Posterior cingulate gyrus (tissue), 11 donors: ENCODE measurements at regions of chr3 and their contacts with region 1.

Region 1: GRCh38 chr3:38004415-38005076 is 14.0 kb downstream of the VILL start:
- DNase-seq: peak; percentile 64 to 96 (median 84)

Region 2: GRCh38 chr3:37974121-37975083 is 30.1 kb before region 1 on chr3:
- intact Hi-C with region 1: loop called (anchors 1 kb)
- DNase-seq: peak in 7 of 10 donors; percentile 63 to 94 (median 70)